CD4-positive, alpha-beta T cell (primary cell): ENCODE measurements at regions of chr2 and their contacts with region 1.

Region 1: GRCh38 chr2:136117909-136118818 is at the start of gene CXCR4:
- DNase-seq: peak; percentile 89 to 98 (median 94)
- ATAC-seq: peak; percentile 29
- H3K4me3 ChIP-seq: peak within 1 kb of the TSS; percentile 87
- H3K4me3 Mint-ChIP-seq: peak within 1 kb of the TSS; percentile 99
- H3K27ac ChIP-seq: peak within 1 kb of the TSS; percentile 85 to 96
- H3K27ac Mint-ChIP-seq: peak within 1 kb of the TSS; percentile 97
- H3K4me1 ChIP-seq: peaks cover 28% of the 10 kb centered on the region
- H3K4me1 Mint-ChIP-seq: peaks cover 72% of the 10 kb centered on the region
- H3K27me3 ChIP-seq: no peaks in the 10 kb centered on the region
- H3K27me3 Mint-ChIP-seq: peaks cover 28% of the 10 kb centered on the region
- CTCF ChIP-seq: no peak
- total RNA-seq, gene CXCR4: 1,661 to 1,739 TPM

Region 2: DNA sequence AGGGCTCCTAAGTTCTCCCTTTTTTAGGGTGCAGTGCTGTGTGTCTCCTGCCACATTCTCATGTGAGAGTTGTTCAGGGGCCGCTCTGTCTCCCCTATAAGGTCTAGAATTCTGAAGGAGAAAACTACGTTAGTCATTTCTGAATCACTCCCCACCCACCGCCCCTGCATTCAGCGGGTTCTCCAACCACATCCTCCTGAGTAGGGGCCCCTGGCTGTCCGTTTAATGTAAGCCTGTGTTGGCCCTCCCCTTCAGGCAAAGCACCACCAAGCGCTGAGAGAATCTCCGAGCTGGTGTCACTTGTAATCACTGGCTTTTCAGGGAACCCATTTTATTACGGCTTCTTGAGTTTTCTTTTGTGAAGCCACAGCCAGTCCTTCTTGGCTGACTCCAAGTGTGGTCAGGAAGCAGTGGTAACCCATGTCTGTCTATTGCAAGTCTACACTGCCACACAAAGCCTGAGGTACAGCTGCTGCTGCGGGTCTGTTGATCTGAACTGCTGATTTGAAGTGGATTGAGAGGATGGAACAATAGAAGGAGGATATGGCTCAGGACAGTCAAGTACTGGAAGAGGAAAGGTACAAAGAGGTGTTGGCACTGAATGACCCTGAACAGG is 298.1 kb before region 1 on chr2:
- CTCF ChIA-PET with region 1: no interaction called
- POLR2A ChIA-PET with region 1: no interaction called
- intact Hi-C with region 1: no loop called
- DNase-seq: peak in 13 of 14 experiments; percentile 5 to 65 (median 34)
- ATAC-seq: peak; percentile 92
- H3K4me3 ChIP-seq: peak overlapping the region; percentile 16
- H3K4me3 Mint-ChIP-seq: peak overlapping the region; percentile 56
- H3K27ac ChIP-seq: no peak overlapping the region
- H3K27ac Mint-ChIP-seq: peak overlapping the region; percentile 45
- H3K4me1 ChIP-seq: peaks cover 20% of the 10 kb centered on the region
- H3K4me1 Mint-ChIP-seq: peaks cover 16% of the 10 kb centered on the region
- H3K27me3 ChIP-seq: no peaks in the 10 kb centered on the region
- H3K27me3 Mint-ChIP-seq: no peaks in the 10 kb centered on the region
- CTCF ChIP-seq: no peak

Region 3: GRCh38 chr2:135985018-135985825 is 132.9 kb before region 1 on chr2 and contains the start of gene DARS1:
- CTCF ChIA-PET with region 1: no interaction called
- POLR2A ChIA-PET with region 1: interaction called, 6 read pairs
- intact Hi-C with region 1: loop called (anchors 2 to 5 kb)
- DNase-seq: peak; percentile 59 to 91 (median 68)
- ATAC-seq: peak; percentile 82
- H3K4me3 ChIP-seq: peak within 1 kb of the TSS; percentile 84
- H3K4me3 Mint-ChIP-seq: peak within 1 kb of the TSS; percentile 99
- H3K27ac ChIP-seq: peak within 1 kb of the TSS; percentile 95 to 98
- H3K27ac Mint-ChIP-seq: peak within 1 kb of the TSS; percentile 99
- H3K4me1 ChIP-seq: peaks cover 7% of the 10 kb centered on the region
- H3K4me1 Mint-ChIP-seq: peaks cover 50% of the 10 kb centered on the region
- H3K27me3 ChIP-seq: no peaks in the 10 kb centered on the region
- H3K27me3 Mint-ChIP-seq: no peaks in the 10 kb centered on the region
- CTCF ChIP-seq: no peak
- total RNA-seq, gene DARS1: 38.2 to 41.7 TPM

Region 4: GRCh38 chr2:136052369-136053362 is 65.5 kb before region 1 on chr2:
- CTCF ChIA-PET with region 1: interaction called, 3 read pairs
- POLR2A ChIA-PET with region 1: interaction called, 3 read pairs
- intact Hi-C with region 1: loop called in 1 of 2 experiments (anchors 5 kb)
- DNase-seq: peak in 4 of 14 experiments; percentile 18 to 52 (median 41)
- ATAC-seq: no peak
- H3K4me3 ChIP-seq: no peak overlapping the region
- H3K4me3 Mint-ChIP-seq: peak overlapping the region; percentile 18
- H3K27ac ChIP-seq: peak overlapping the region; percentile 23 to 26
- H3K27ac Mint-ChIP-seq: peak overlapping the region; percentile 76
- H3K4me1 ChIP-seq: peaks cover 79% of the 10 kb centered on the region
- H3K4me1 Mint-ChIP-seq: peaks cover 83% of the 10 kb centered on the region
- H3K27me3 ChIP-seq: no peaks in the 10 kb centered on the region
- H3K27me3 Mint-ChIP-seq: no peaks in the 10 kb centered on the region
- CTCF ChIP-seq: no peak

Region 5: DNA sequence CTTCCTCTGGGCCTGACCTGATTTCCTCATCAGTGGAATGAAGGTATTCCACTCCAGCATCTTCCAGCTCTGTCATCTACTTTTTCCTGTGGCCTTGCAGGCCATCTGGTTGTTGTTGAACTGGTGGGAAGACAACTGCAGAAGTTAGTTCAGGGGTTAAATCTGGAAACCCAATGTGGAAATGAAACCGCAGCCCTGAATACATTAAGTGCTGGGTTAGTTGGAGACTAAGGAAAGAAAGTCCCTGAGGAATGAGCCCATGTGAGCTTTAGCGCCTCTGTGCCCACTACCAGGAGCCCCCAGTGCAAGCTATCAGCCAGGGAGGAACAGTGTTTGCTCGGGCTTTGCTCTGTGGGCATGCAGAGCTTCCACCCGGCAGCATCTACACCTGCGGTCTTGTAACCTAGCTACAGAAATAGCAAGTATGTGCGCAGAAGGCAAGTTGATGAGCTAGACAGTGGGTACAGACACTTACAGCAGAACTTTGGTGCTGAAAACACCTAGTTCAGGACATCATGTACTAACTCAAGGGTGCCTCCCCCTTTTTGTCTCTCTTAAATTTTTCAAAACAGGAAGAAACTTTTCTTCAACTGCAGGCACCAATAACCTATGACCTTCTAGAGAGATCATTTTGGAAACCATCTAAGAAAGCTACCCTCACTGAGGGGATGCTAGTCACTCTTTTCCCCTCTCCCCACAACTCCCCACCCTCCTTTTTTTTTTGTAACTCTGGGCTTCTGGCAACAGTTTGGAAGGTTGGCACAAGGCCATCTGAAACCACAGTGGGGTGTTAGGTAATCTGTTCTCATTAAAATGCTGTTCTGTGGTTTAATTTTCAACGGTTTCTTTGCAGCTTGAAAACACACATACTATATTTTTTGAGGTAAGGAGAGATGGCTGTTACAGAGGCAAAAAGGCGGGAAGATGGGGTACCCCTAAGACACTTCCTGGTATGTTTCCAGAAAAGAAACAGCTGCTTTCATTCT is 18.1 kb after region 1 on chr2:
- CTCF ChIA-PET with region 1: interaction called, 18 read pairs
- POLR2A ChIA-PET with region 1: interaction called, 488 read pairs
- intact Hi-C with region 1: loop called (anchors 1 to 2 kb)
- DNase-seq: peak; percentile 71 to 97 (median 78)
- ATAC-seq: peak; percentile 61
- H3K4me3 ChIP-seq: peak overlapping the region; percentile 27
- H3K4me3 Mint-ChIP-seq: peak overlapping the region; percentile 51
- H3K27ac ChIP-seq: peak overlapping the region; percentile 94 to 99
- H3K27ac Mint-ChIP-seq: peak overlapping the region; percentile 97
- H3K4me1 ChIP-seq: peaks cover 94% of the 10 kb centered on the region
- H3K4me1 Mint-ChIP-seq: peaks cover 96% of the 10 kb centered on the region
- H3K27me3 ChIP-seq: no peaks in the 10 kb centered on the region
- H3K27me3 Mint-ChIP-seq: no peaks in the 10 kb centered on the region
- CTCF ChIP-seq: no peak

Region 6: DNA sequence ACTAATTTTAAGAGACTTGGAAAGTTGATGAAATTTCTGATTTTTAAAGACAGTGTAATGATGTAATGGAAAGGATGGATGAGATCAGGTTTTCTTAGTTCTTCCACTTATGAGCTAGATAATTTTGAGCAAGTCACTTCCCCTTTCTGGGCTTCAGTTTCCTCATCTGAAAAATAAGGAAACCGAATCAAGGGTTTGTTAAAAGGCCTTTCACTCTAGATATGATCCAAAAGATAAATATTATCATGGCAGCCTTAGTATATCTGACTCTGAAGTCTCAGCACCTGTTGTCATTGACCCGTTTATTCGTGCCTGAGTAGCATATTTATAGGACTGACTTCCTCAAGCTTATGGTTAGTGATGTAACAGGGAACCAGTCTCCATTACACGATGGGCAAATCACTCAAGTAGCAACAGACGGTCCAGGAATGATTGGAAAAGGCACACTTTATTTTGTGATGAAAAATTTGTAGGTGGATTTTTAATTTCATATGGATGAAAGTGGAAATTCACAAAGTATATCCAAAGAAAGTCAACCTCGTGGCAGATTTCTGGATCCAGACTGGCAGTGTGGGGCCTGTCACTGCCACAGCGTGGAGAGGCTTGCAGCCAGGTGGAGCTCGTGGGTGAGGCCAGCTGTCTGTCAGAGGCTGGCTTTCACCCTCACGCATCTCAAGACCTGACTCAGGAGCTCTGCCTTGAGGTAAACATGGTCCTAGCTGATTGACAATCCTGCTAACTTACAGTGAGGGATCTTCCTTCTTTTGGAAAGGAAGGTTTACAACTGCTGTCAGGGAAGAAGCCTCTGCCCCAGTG is 137.7 kb after region 1 on chr2:
- CTCF ChIA-PET with region 1: no interaction called
- POLR2A ChIA-PET with region 1: interaction called, 5 read pairs
- intact Hi-C with region 1: loop called in 1 of 2 experiments (anchors 5 kb)
- DNase-seq: peak in 11 of 14 experiments; percentile 13 to 62 (median 37)
- ATAC-seq: peak; percentile 94
- H3K4me3 ChIP-seq: no peak overlapping the region
- H3K4me3 Mint-ChIP-seq: no peak overlapping the region
- H3K27ac ChIP-seq: no peak overlapping the region
- H3K27ac Mint-ChIP-seq: peak overlapping the region; percentile 12
- H3K4me1 ChIP-seq: no peaks in the 10 kb centered on the region
- H3K4me1 Mint-ChIP-seq: peaks cover 26% of the 10 kb centered on the region
- H3K27me3 ChIP-seq: no peaks in the 10 kb centered on the region
- H3K27me3 Mint-ChIP-seq: no peaks in the 10 kb centered on the region
- CTCF ChIP-seq: peak; percentile 45

Region 7: GRCh38 chr2:136378712-136379595 is 260.8 kb after region 1 on chr2:
- CTCF ChIA-PET with region 1: interaction called, 3 read pairs
- POLR2A ChIA-PET with region 1: interaction called, 4 read pairs
- intact Hi-C with region 1: loop called (anchors 1 to 2 kb)
- DNase-seq: peak; percentile 63 to 88 (median 76)
- ATAC-seq: peak; percentile 35
- H3K4me3 ChIP-seq: no peak overlapping the region
- H3K4me3 Mint-ChIP-seq: peak overlapping the region; percentile 31
- H3K27ac ChIP-seq: no peak overlapping the region
- H3K27ac Mint-ChIP-seq: peak overlapping the region; percentile 80
- H3K4me1 ChIP-seq: peaks cover 43% of the 10 kb centered on the region
- H3K4me1 Mint-ChIP-seq: peaks cover 72% of the 10 kb centered on the region
- H3K27me3 ChIP-seq: no peaks in the 10 kb centered on the region
- H3K27me3 Mint-ChIP-seq: no peaks in the 10 kb centered on the region
- CTCF ChIP-seq: peak; percentile 78